ENCODE measurements at regions of chr6 and their contacts with region 1.

Region 1: DNA sequence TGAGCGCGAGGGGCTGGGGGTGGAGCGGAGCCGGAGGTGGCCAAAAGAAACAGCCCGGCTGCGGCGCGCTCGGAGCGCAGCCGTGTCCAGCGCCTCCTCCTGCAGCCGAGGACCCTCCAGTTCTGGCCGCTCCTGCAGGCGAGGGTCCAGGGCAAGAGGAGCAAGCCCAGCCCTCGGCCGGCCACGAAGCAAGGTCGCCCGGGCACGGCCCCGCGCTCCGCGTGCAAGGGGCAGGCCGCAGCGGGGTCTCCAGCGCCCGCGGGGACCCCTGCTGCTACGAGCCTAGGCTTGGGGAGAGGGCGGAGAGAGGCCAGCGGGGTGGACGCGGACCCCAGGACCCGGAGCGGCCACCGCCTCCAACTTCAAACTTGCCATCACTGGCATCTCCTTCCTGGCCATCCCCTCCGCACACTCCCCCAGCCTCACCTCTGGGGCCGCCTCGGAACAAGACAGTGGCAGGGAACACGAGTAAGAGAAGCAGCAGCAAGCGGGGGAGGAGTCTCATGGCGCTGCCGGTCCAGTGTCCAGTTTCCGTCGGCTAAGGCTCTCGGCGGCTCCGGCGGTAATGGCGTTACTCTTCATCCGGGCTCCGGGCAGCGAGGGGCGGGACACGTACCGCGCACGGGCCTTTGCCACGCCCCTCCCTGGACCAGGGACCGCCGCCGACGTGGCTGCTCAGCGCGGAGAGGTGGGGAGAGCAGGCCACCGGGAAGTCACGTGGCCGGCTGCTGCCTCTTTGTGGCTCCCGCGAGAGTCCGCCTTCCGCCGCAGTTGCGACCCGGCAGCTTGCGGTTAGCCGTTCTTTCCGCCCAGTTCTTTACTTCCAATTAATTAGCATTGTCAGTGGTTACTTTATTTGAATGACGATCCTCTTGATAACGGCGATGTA is at the start of gene SSR1:
- DNase-seq: peak; percentile 99
- ATAC-seq: peak; percentile 100
- total RNA-seq, gene SSR1: 47.5 TPM

Region 2: GRCh38 chr6:6772751-6773150 is 540.1 kb before region 1 on chr6:
- intact Hi-C with region 1: no loop called
- DNase-seq: no peak
- ATAC-seq: peak; percentile 59

Region 3: DNA sequence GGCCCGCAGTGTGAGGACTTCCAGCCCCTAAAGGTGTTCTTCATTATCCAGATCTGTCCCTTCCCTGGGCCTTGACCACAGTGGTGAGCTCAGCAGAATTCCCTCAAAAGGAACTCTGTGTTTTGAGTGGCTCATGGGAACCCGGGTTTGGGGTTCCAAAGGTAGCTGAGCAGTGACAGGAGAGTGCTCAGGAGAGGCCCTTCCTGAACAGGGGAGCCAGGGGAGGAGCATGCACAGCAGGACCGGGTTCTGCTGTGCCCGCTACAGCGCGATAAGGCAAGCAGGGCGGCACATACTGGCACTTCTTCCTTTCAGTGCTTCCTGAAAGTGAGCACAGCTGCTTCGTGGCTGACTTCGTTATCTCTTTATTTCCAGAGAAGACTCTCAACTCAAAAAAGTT is 88.1 kb before region 1 on chr6:
- intact Hi-C with region 1: no loop called
- DNase-seq: no peak
- ATAC-seq: peak; percentile 55

Region 4: DNA sequence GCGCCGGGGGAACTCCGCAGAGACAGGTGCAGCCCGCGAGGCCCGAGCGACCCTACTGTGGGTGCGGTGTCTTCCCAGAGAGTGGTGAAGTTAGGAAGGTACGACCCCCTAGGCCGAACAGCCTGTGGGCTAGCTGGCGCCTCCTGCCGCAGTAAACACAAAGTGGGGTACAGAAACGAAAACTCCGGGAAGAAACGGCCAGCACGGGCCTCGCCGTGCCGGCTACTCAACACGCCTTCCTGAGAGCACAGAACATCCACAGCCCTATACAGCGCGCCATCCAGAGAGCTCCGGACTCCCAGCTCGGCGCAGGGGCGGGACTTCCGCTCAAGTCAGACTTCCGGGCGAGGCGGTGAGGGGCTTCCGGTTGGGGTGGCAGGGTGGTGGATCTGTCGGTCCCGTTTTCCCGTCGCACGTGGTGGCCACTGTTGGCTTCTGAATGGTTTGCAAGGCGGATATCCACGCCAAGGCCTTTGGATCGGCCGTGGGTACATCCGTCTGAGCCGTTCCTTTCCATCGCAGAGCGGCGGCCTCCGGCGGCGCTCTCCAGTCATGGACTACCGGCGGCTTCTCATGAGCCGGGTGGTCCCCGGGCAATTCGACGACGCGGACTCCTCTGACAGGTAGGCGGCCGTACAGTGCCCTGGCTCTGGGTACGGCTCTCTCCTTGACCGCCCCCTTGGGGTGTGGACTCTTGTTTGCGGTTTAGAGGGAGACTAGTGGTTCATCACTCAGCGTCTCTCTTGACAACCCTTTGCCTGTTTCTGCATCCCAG is 76.8 kb after region 1 on chr6 and contains the starts of genes CAGE1 and RIOK1:
- intact Hi-C with region 1: loop called (anchors 2 kb)
- DNase-seq: peak; percentile 98
- ATAC-seq: peak; percentile 100
- total RNA-seq, gene CAGE1: not detected
- total RNA-seq, gene RIOK1: 8.4 TPM

Region 5: GRCh38 chr6:7496266-7496875 is 183.5 kb after region 1 on chr6:
- intact Hi-C with region 1: no loop called
- DNase-seq: peak; percentile 47
- ATAC-seq: peak; percentile 83

Region 6: DNA sequence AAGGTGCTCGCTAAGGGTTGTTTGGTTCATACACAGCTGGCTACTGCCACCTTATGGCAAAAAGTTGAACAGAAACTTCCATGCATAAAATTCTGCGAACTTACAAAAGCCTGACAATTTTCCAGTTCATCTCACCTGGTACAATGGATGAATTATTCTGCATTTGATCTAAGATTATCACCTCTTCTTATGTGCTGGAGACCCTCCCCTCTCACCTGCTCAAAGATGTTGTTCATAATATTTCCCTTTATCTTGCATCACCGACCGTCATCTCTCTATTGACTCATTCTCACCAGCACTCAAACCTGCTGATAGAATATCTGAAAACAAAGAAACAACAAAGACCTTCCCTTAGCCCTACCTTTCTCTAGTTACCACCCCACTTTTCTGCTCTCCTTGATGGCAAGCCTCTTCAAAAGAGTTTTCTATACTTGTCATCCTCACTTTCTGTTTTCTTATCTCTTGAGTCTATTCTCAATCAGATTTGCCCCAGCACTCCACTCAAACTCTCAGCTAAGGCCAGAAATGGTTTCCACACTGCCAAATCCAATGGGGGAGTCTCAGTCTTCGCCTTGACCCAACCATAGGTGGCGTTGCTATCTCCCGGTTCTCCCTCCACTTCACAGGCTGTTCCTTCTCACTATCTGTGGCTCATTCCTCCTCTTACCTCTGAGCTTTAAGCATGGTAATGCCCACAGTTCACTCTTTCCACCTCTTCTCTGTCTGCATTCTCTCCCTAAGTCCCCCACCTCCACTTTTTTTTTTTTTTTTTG is 302.9 kb after region 1 on chr6:
- intact Hi-C with region 1: loop called (anchors 10 kb)
- DNase-seq: no peak
- ATAC-seq: peak; percentile 71

Region 7: DNA sequence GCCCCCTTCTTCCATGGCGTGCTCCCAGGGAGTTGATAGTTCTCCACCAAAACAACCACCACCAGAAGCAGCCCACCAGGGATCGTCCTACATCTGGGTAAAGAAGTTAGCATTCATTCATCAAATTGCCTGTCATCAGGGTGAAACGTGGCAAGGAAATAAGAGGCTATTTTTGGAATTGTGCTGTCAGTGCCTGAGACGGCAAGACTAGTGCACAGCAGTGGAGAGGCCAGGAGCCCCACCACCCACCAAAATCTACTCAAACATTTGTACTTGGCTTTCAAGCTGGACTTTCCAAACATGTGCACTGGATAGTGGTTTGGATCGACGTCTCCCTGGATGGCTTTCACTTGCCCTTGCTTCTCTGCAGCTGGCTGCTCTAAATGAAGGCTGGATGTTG is 552.9 kb after region 1 on chr6:
- intact Hi-C with region 1: no loop called
- DNase-seq: no peak
- ATAC-seq: peak; percentile 25

Measured in Right ventricle myocardium superior (tissue), 1 donor.